IMR-90 (cell line): ENCODE measurements at regions of chr15 and their contacts with region 1.

Region 1: GRCh38 chr15:58475573-58476524 is 44.1 kb downstream of the LIPC start:
- DNase-seq: peak; percentile 36
- ATAC-seq: no peak
- H3K4me3 ChIP-seq: no peak overlapping the region
- H3K27ac ChIP-seq: no peak overlapping the region
- H3K4me1 ChIP-seq: peaks cover 19% of the 10 kb centered on the region
- H3K27me3 ChIP-seq: no peaks in the 10 kb centered on the region
- CTCF ChIP-seq: no peak
- POLR2A ChIP-seq: no peak
- RAD21 ChIP-seq: no peak

Region 2: GRCh38 chr15:58077427-58077826 is 398.4 kb before region 1 on chr15:
- CTCF ChIA-PET with region 1: no interaction called
- POLR2A ChIA-PET with region 1: no interaction called
- dilution Hi-C with region 1: no loop called
- in situ Hi-C with region 1: no loop called
- intact Hi-C with region 1: no loop called
- DNase-seq: no peak
- ATAC-seq: no peak
- H3K4me3 ChIP-seq: no peak overlapping the region
- H3K27ac ChIP-seq: no peak overlapping the region
- H3K4me1 ChIP-seq: no peaks in the 10 kb centered on the region
- H3K27me3 ChIP-seq: peaks cover 5% of the 10 kb centered on the region
- CTCF ChIP-seq: no peak
- POLR2A ChIP-seq: no peak
- RAD21 ChIP-seq: no peak

Region 3: GRCh38 chr15:58401991-58402649 is 73.7 kb before region 1 on chr15:
- CTCF ChIA-PET with region 1: no interaction called
- POLR2A ChIA-PET with region 1: no interaction called
- dilution Hi-C with region 1: no loop called
- in situ Hi-C with region 1: no loop called
- intact Hi-C with region 1: no loop called
- DNase-seq: no peak
- ATAC-seq: no peak
- H3K4me3 ChIP-seq: no peak overlapping the region
- H3K27ac ChIP-seq: no peak overlapping the region
- H3K4me1 ChIP-seq: peaks cover 3% of the 10 kb centered on the region; the same call in 1 of the 2 replicates
- H3K27me3 ChIP-seq: no peaks in the 10 kb centered on the region
- CTCF ChIP-seq: no peak
- POLR2A ChIP-seq: no peak
- RAD21 ChIP-seq: no peak

Region 4: DNA sequence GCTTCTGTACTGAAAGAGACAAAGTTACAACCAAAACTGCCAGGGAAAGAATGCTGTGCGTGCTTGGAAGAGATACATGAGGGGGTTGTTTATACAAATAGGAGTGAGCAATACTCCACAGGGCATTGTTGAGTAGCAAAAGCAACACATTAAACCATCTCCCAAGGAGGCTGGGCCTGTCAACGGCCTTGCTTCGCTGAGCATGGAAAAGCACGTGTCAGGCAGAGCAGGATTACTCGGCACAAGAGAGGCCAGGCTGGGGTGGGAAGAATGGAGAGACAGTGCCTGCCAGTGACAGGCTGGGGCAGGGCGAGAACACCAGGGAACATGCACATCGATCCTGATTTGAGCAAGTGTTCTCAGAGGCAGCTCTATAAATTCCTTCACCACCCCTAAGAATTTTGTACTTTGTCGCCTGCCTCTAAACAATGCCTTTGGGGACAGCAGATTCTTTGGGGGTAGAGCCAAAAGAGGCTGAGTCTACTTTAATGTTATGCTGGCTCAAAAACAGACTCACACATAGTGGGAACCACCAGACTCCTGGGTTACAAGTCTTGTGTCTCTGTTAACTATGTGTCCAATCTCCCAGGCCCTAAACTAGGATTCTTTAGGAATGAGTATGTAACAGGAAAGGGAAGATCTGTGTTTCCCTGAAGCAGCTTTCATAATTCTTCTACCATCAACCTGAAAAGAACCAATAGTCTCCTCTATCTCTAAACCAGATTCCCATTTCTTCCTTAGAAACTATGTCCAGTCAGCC is 23.2 kb after region 1 on chr15:
- CTCF ChIA-PET with region 1: interaction called, 7 read pairs
- POLR2A ChIA-PET with region 1: no interaction called
- dilution Hi-C with region 1: no loop called
- in situ Hi-C with region 1: no loop called
- intact Hi-C with region 1: loop called (anchors 2 kb)
- DNase-seq: peak; percentile 98
- ATAC-seq: peak; percentile 94
- H3K4me3 ChIP-seq: no peak overlapping the region
- H3K27ac ChIP-seq: peak overlapping the region; percentile 64
- H3K4me1 ChIP-seq: peaks cover 24% of the 10 kb centered on the region
- H3K27me3 ChIP-seq: no peaks in the 10 kb centered on the region
- CTCF ChIP-seq: no peak
- POLR2A ChIP-seq: no peak
- RAD21 ChIP-seq: no peak; the same call in 1 of the 2 replicates